HepG2 (cell line): ENCODE measurements at regions of chr6 and their contacts with region 1.

Region 1: GRCh38 chr6:11232193-11232769 is at the start of gene NEDD9:
- DNase-seq: peak; percentile 98
- ATAC-seq: peak; percentile 96
- H3K4me3 ChIP-seq: peak within 1 kb of the TSS; percentile 80 to 94 (median 87)
- H3K27ac ChIP-seq: peak within 1 kb of the TSS; percentile 94
- H3K4me1 ChIP-seq: peaks cover 52% of the 10 kb centered on the region
- H3K27me3 ChIP-seq: peaks cover 0 to 4% of the 10 kb centered on the region in 2 experiments; a peak in 2 of 5 replicates
- CTCF ChIP-seq: peak; percentile 48
- EP300 ChIP-seq: no peak; a peak in 2 of 4 replicates
- POLR2A ChIP-seq: peak; percentile 98 to 100
- RAD21 ChIP-seq: peak; percentile 50; the same call in 1 of the 2 replicates
- total RNA-seq, gene NEDD9: 27.1 and 31.4 TPM in 2 replicates

Region 2: GRCh38 chr6:10954590-10955010 is 277.7 kb before region 1 on chr6:
- CTCF ChIA-PET with region 1: no interaction called
- POLR2A ChIA-PET with region 1: no interaction called
- in situ Hi-C with region 1: no loop called
- intact Hi-C with region 1: loop called (anchors 10 kb)
- DNase-seq: peak; percentile 82
- ATAC-seq: peak; percentile 76
- H3K4me3 ChIP-seq: no peak overlapping the region; a peak in 1 of 6 replicates
- H3K27ac ChIP-seq: no peak overlapping the region
- H3K4me1 ChIP-seq: peaks cover 89% of the 10 kb centered on the region
- H3K27me3 ChIP-seq: no peaks in the 10 kb centered on the region
- CTCF ChIP-seq: peak; percentile 99
- EP300 ChIP-seq: peak in 1 of 2 experiments; percentile 19; a peak in 1 of 4 replicates
- POLR2A ChIP-seq: no peak
- RAD21 ChIP-seq: peak; percentile 96

Region 3: DNA sequence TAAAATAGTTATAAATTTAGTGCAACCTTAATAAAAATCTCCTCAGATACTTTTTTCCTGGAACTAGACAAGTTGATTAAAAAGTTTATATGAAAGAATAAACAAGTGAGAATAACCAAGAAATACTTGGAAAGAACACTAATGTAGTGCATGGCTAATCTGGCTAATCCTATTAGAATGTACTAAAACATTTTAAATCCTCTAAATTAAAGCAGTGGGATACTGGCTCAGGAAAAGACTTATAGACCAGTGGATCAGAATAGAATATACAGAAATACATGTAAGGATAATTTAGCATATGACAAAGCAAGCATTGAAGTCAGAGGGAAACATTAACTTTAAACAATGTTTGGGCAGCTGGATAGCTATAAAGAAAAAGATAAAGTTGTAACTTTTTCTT is 79.7 kb before region 1 on chr6:
- CTCF ChIA-PET with region 1: no interaction called
- POLR2A ChIA-PET with region 1: no interaction called
- in situ Hi-C with region 1: no loop called
- intact Hi-C with region 1: no loop called
- DNase-seq: no peak
- ATAC-seq: no peak
- H3K4me3 ChIP-seq: no peak overlapping the region
- H3K27ac ChIP-seq: no peak overlapping the region
- H3K4me1 ChIP-seq: no peaks in the 10 kb centered on the region
- H3K27me3 ChIP-seq: no peaks in the 10 kb centered on the region
- CTCF ChIP-seq: no peak
- EP300 ChIP-seq: no peak
- POLR2A ChIP-seq: no peak
- RAD21 ChIP-seq: no peak

Region 4: DNA sequence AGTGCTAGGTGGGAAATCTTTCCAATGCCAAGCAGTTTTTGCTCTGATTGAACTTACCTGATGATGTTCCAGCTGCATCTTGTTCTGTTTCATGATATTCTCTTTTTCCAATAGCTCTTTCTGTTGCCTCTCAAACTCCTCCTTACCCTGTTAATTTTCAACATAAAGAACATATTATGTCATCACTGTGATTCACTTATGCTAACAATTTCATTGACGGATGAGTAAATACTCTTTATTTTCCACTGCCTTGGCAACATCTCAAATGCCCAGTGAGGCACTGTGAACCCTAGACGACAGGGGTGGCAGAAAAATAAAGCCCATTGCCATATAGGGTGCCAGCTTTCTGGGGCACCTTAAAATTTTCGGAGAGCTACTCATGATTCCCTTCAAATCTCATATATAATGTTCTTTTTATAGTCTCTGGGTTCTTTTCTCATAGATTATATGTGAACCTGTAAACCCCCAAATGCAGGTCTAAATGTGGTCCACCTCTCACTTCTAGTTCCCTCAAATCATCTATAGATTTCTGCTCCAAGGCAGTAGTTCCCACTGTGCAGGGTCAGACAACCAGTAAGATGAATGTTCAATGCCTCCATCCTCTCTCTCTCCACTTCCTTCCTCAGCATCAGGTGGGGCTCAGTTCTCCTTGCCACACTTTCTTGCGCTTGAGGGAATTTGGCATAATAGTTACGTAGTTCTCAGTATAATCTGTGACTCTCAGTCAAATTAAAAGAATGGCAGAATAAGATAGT is 43.9 kb before region 1 on chr6:
- CTCF ChIA-PET with region 1: no interaction called
- POLR2A ChIA-PET with region 1: interaction called, 11 read pairs
- in situ Hi-C with region 1: no loop called
- intact Hi-C with region 1: no loop called
- DNase-seq: peak; percentile 57
- ATAC-seq: no peak
- H3K4me3 ChIP-seq: no peak overlapping the region
- H3K27ac ChIP-seq: peak overlapping the region; percentile 49
- H3K4me1 ChIP-seq: peaks cover 35% of the 10 kb centered on the region
- H3K27me3 ChIP-seq: no peaks in the 10 kb centered on the region
- CTCF ChIP-seq: no peak
- EP300 ChIP-seq: no peak; a peak in 1 of 4 replicates
- POLR2A ChIP-seq: no peak; a peak in 1 of 4 replicates
- RAD21 ChIP-seq: no peak

Region 5: DNA sequence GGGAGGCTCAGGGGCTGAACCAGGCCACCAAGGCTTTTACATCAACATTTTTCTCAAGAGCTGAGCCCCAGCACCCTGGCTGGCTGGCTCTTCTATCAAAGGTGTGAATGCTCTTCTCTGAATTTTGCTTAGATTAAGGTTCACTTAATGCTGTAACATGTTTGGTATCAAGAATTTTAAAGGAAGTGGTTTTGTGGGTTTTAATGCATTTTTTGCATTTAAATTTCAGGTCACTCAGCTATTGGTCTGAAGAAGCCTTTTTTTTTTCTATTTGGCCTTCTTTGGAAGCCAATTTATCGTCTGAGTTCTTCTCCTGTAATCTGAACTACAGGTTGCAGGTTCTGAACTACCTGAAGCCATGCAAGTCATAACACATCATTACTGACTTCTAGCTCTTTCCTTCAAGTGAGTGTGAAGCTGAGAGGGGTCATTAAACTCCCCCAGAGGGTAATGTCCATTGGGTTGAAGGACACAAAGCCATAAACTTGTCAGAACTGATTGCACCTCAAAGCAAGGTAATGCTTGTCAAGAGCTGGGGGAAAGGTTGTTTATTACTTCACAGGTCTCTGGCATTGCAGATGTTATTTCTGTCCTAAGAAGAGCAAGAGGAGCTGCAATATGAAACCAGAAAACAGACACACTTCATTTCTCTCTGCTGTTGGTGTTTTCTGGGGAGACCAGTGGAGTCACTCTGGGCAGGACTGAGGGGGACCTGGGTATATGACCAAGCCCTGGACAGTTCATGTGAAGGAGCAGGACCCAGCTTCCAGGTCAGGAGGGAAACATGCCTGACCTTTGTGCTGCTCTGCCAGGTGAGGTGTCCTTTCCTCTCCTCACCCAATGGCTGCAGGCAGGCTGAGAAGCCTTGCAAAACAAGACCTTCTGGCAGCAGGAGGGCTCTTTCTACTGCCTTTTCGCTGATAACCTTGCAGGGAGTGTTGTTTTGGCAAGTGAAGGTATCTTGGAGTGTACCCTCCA is 26.3 kb after region 1 on chr6:
- CTCF ChIA-PET with region 1: no interaction called
- POLR2A ChIA-PET with region 1: interaction called, 10 read pairs
- in situ Hi-C with region 1: no loop called
- intact Hi-C with region 1: no loop called
- DNase-seq: no peak
- ATAC-seq: peak; percentile 80
- H3K4me3 ChIP-seq: no peak overlapping the region
- H3K27ac ChIP-seq: peak overlapping the region; percentile 35
- H3K4me1 ChIP-seq: peaks cover 45% of the 10 kb centered on the region
- H3K27me3 ChIP-seq: no peaks in the 10 kb centered on the region
- CTCF ChIP-seq: no peak
- EP300 ChIP-seq: peak in 1 of 2 experiments; percentile 4; a peak in 1 of 4 replicates
- POLR2A ChIP-seq: no peak
- RAD21 ChIP-seq: no peak

Region 6: GRCh38 chr6:11307226-11307625 is 74.9 kb after region 1 on chr6:
- CTCF ChIA-PET with region 1: no interaction called
- POLR2A ChIA-PET with region 1: no interaction called
- in situ Hi-C with region 1: no loop called
- intact Hi-C with region 1: no loop called
- DNase-seq: no peak
- ATAC-seq: no peak
- H3K4me3 ChIP-seq: no peak overlapping the region
- H3K27ac ChIP-seq: no peak overlapping the region
- H3K4me1 ChIP-seq: no peaks in the 10 kb centered on the region; the same call in 1 of the 2 replicates
- H3K27me3 ChIP-seq: no peaks in the 10 kb centered on the region
- CTCF ChIP-seq: no peak
- EP300 ChIP-seq: no peak
- POLR2A ChIP-seq: no peak
- RAD21 ChIP-seq: no peak

Region 7: GRCh38 chr6:11346516-11346915 is 114.2 kb after region 1 on chr6:
- CTCF ChIA-PET with region 1: no interaction called
- POLR2A ChIA-PET with region 1: no interaction called
- in situ Hi-C with region 1: no loop called
- intact Hi-C with region 1: no loop called
- DNase-seq: no peak
- ATAC-seq: no peak
- H3K4me3 ChIP-seq: no peak overlapping the region
- H3K27ac ChIP-seq: no peak overlapping the region
- H3K4me1 ChIP-seq: peaks cover 54% of the 10 kb centered on the region
- H3K27me3 ChIP-seq: no peaks in the 10 kb centered on the region
- CTCF ChIP-seq: no peak
- EP300 ChIP-seq: no peak
- POLR2A ChIP-seq: no peak
- RAD21 ChIP-seq: no peak

Region 8: DNA sequence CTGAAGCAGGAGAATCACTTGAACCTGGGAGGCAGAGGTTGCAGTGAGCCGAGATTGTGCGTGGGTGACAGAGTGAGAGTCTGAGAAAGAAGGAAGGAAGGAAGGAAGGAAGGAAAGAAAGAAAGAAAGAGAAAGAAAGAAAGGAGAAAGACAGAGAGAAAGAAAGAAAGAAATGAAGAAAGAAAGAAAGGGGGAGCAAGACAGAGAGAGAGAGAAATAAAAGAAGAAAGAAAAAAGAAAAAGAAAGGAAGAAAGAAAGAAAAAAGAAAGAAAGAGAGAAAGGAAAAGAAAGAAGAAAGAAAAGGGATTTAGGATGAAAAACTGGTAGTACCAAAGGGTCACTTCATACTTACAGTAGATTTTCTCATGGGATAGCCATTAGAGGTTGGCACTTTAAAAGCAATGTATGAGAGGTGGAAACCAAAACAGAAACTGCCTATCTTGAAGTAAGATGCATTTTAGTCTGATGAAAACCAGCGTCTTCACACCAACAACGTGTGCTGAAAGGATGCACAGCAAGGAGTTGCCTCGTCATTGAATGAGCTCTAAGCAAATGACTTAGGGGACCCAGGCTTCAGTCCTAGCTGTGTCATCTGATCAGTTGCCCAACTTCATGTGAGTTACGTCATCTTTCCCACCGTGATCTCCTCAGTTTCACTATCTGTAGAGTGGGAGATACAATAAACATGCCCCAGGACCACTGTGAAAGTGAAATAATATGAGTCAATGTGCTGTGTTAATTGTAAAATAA is 134.1 kb after region 1 on chr6:
- CTCF ChIA-PET with region 1: no interaction called
- POLR2A ChIA-PET with region 1: interaction called, 33 read pairs
- in situ Hi-C with region 1: no loop called
- intact Hi-C with region 1: loop called (anchors 1 kb)
- DNase-seq: no peak
- ATAC-seq: no peak
- H3K4me3 ChIP-seq: no peak overlapping the region
- H3K27ac ChIP-seq: peak overlapping the region; percentile 94
- H3K4me1 ChIP-seq: peaks cover 77% of the 10 kb centered on the region
- H3K27me3 ChIP-seq: no peaks in the 10 kb centered on the region
- CTCF ChIP-seq: no peak
- EP300 ChIP-seq: no peak; a peak in 1 of 4 replicates
- POLR2A ChIP-seq: no peak
- RAD21 ChIP-seq: no peak; the same call in 1 of the 2 replicates

Region 9: GRCh38 chr6:11434565-11435326 is 202.5 kb after region 1 on chr6:
- CTCF ChIA-PET with region 1: no interaction called
- POLR2A ChIA-PET with region 1: interaction called, 10 read pairs
- in situ Hi-C with region 1: no loop called
- intact Hi-C with region 1: loop called (anchors 1 kb)
- DNase-seq: peak; percentile 100
- ATAC-seq: peak; percentile 95
- H3K4me3 ChIP-seq: peak overlapping the region in 1 of 3 experiments; percentile 16; a peak in 1 of 6 replicates
- H3K27ac ChIP-seq: peak overlapping the region; percentile 69
- H3K4me1 ChIP-seq: peaks cover 78% of the 10 kb centered on the region
- H3K27me3 ChIP-seq: no peaks in the 10 kb centered on the region
- CTCF ChIP-seq: peak; percentile 33; the same call in 1 of the 2 replicates
- EP300 ChIP-seq: peak; percentile 91 to 95
- POLR2A ChIP-seq: no peak
- RAD21 ChIP-seq: no peak

Region 10: GRCh38 chr6:11810039-11810541 is 577.8 kb after region 1 on chr6:
- CTCF ChIA-PET with region 1: no interaction called
- POLR2A ChIA-PET with region 1: no interaction called
- in situ Hi-C with region 1: no loop called
- intact Hi-C with region 1: no loop called
- DNase-seq: no peak
- ATAC-seq: no peak
- H3K4me3 ChIP-seq: no peak overlapping the region
- H3K27ac ChIP-seq: no peak overlapping the region
- H3K4me1 ChIP-seq: no peaks in the 10 kb centered on the region
- H3K27me3 ChIP-seq: peaks cover 0 to 13% of the 10 kb centered on the region in 2 experiments; a peak in 3 of 5 replicates
- CTCF ChIP-seq: no peak
- EP300 ChIP-seq: no peak
- POLR2A ChIP-seq: no peak
- RAD21 ChIP-seq: no peak